ENCODE measurements at regions of chr12 and their contacts with region 1.

Region 1: DNA sequence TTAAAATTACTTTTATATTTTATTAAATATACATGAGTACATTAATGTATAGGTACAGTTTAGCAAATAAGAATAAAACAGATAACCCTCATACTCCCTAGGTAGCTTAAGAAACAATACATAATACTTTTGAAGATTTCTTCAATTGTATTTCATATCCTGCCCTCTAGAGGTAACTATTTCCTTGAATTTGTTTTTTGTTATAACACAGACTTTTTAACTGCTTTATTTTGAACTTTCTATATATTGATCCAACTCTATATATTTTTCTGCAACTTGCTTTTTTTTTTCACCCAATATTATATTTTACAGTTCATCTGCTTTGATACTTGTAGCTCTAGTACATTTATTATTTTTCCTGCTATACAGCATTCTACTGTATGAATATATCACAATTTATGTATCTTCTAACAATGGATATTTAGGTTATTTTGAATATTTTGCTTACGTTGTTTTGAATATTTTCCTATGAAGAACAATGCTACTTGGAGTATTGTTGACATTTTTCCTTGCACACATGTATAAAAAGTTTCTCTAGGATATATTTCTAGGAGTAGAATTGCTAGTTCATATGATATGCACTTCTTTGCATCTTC is 72.8 kb upstream of the ABCD2 start:
- DNase-seq: no peak
- ATAC-seq: no peak

Region 2: GRCh38 chr12:39595923-39596322 is 96.4 kb before region 1 on chr12:
- intact Hi-C with region 1: loop called (anchors 10 kb)
- DNase-seq: no peak
- ATAC-seq: no peak

Region 3: GRCh38 chr12:40034712-40035111 is 342.4 kb after region 1 on chr12:
- intact Hi-C with region 1: no loop called
- DNase-seq: no peak
- ATAC-seq: no peak

Measured in Right ventricle myocardium superior (tissue), 1 donor.